CD8-positive, alpha-beta memory T cell (primary cell): ENCODE measurements at regions of chr19 and their contacts with region 1.

Region 1: DNA sequence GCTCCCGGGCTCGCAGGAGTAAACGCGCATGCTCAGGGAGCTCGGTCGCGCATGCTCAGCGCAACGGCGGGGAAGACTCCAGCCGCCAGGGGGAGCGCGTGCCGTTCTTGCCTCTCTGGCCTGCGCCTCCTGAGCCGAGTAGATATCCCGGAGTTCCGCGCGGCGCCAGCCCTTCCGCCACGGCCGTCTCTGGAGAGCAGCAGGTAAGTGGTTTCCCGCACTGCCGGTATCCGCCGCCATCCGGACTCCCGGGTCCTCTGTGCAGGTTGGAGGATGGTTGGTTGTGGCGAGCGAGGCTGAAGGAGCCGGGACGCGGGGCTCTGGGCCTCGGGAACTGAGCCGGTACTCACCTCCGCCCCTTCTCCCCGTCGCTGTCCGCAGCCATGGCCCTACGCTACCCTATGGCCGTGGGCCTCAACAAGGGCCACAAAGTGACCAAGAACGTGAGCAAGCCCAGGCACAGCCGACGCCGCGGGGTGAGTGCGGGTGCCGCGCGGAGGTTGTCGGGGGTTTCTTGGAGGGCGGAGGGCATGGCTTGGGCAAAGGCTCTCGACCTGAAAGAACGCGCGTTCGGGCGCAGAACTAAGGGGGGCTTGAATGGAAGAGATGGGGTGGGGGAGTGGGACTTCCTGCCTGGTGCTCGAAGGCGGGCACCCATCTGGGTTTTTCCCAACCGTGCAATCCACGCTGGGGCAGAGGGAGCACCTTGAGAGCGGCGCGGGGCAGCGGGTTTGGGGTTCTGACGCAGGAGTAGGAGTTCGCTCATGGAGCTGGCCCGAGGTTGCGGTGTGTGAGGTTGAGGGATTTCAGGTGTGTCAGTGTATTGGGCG is at the start of gene RPL36:
- DNase-seq: peak; percentile 97 to 98 (median 98)
- H3K4me3 ChIP-seq: peak within 1 kb of the TSS; percentile 97
- H3K4me3 Mint-ChIP-seq: peak within 1 kb of the TSS; percentile 91 to 97 (median 95)
- H3K27ac ChIP-seq: peak within 1 kb of the TSS; percentile 89
- H3K27ac Mint-ChIP-seq: peak within 1 kb of the TSS; percentile 90 to 99 (median 97)
- H3K4me1 ChIP-seq: peaks cover 16% of the 10 kb centered on the region
- H3K4me1 Mint-ChIP-seq: peaks cover 24 to 64% (median 28%) of the 10 kb centered on the region in 3 donors
- H3K27me3 ChIP-seq: no peaks in the 10 kb centered on the region
- H3K27me3 Mint-ChIP-seq: no peaks in the 10 kb centered on the region
- total RNA-seq, gene RPL36: 1,478 to 1,485 TPM

Region 2: GRCh38 chr19:5622463-5623396 is 67.6 kb before region 1 on chr19 and contains the starts of genes SAFB and SAFB2:
- CTCF ChIA-PET with region 1: interaction called, 35 read pairs
- POLR2A ChIA-PET with region 1: interaction called, 25 read pairs
- DNase-seq: peak; percentile 99 to 100 (median 100)
- H3K4me3 ChIP-seq: peak within 1 kb of the TSS; percentile 90
- H3K4me3 Mint-ChIP-seq: peak within 1 kb of the TSS; percentile 98 to 100 (median 100)
- H3K27ac ChIP-seq: peak within 1 kb of the TSS; percentile 93
- H3K27ac Mint-ChIP-seq: peak within 1 kb of the TSS; percentile 99 to 100 (median 100)
- H3K4me1 ChIP-seq: peaks cover 76% of the 10 kb centered on the region
- H3K4me1 Mint-ChIP-seq: peaks cover 73 to 85% (median 80%) of the 10 kb centered on the region in 3 donors
- H3K27me3 ChIP-seq: no peaks in the 10 kb centered on the region
- H3K27me3 Mint-ChIP-seq: peaks cover 0 to 6% of the 10 kb centered on the region in 2 donors
- total RNA-seq, gene SAFB: 124 to 132 TPM
- total RNA-seq, gene SAFB2: 87.8 to 98.2 TPM

Region 3: DNA sequence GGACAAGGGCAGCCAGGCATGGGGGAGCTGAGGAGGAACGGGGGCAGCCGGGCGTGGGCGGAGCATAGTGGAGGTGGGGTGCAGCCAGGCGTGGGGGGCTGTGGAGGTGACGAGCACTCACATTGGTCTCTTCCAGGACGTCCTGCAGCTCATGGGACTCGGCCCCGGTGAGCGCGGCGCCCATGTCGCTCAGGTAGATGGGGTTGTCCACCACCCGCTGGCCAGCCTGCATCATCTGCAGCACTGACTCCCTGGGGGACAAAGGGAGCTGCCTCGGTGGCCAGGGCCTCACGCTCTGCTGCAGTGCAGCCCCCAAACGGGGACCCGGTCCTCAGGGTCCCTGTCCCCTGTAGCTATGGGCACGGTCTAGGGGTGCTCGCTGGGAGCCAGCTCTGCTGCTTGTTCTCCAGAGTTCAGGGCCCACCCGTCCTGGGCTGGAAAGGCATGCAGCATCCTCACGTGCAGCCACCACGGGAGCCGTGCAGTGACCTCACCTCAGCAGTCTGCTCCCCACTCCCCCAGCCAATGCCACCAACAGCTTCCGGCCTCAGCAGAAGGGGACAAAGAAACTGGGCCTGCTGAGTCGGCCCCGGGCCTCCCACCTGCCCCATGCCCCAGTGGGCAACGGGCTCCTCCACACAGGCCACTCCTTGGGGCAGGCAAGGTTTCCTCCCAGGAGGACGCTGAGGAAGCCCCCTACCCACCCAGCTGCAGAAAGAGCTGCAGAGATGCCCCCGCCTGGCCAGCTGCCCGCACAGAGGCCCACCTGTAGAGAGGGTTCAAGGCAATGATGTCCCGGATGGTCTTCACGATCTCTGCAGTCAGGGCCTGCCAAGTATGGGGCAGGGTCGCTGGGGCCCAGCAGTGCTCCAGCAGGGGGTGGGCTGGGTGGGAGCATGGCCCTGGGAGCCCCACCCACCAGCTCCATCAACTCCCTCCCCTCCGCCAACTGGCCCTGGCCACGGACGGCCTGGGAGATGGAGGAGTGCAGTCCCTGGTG is 17.5 kb after region 1 on chr19:
- CTCF ChIA-PET with region 1: interaction called, 18 read pairs
- POLR2A ChIA-PET with region 1: interaction called, 3 read pairs
- DNase-seq: no peak
- H3K4me3 ChIP-seq: no peak overlapping the region
- H3K4me3 Mint-ChIP-seq: no peak overlapping the region
- H3K27ac ChIP-seq: no peak overlapping the region
- H3K27ac Mint-ChIP-seq: no peak overlapping the region
- H3K4me1 ChIP-seq: no peaks in the 10 kb centered on the region
- H3K4me1 Mint-ChIP-seq: no peaks in the 10 kb centered on the region
- H3K27me3 ChIP-seq: no peaks in the 10 kb centered on the region
- H3K27me3 Mint-ChIP-seq: no peaks in the 10 kb centered on the region

Region 4: GRCh38 chr19:5714819-5715218 is 24.5 kb after region 1 on chr19:
- CTCF ChIA-PET with region 1: interaction called, 47 read pairs
- POLR2A ChIA-PET with region 1: interaction called, 28 read pairs
- DNase-seq: no peak
- H3K4me3 ChIP-seq: no peak overlapping the region
- H3K4me3 Mint-ChIP-seq: no peak overlapping the region
- H3K27ac ChIP-seq: no peak overlapping the region
- H3K27ac Mint-ChIP-seq: no peak overlapping the region
- H3K4me1 ChIP-seq: peaks cover 22% of the 10 kb centered on the region
- H3K4me1 Mint-ChIP-seq: peaks cover 23 to 28% (median 26%) of the 10 kb centered on the region in 3 donors
- H3K27me3 ChIP-seq: no peaks in the 10 kb centered on the region
- H3K27me3 Mint-ChIP-seq: no peaks in the 10 kb centered on the region

Region 5: DNA sequence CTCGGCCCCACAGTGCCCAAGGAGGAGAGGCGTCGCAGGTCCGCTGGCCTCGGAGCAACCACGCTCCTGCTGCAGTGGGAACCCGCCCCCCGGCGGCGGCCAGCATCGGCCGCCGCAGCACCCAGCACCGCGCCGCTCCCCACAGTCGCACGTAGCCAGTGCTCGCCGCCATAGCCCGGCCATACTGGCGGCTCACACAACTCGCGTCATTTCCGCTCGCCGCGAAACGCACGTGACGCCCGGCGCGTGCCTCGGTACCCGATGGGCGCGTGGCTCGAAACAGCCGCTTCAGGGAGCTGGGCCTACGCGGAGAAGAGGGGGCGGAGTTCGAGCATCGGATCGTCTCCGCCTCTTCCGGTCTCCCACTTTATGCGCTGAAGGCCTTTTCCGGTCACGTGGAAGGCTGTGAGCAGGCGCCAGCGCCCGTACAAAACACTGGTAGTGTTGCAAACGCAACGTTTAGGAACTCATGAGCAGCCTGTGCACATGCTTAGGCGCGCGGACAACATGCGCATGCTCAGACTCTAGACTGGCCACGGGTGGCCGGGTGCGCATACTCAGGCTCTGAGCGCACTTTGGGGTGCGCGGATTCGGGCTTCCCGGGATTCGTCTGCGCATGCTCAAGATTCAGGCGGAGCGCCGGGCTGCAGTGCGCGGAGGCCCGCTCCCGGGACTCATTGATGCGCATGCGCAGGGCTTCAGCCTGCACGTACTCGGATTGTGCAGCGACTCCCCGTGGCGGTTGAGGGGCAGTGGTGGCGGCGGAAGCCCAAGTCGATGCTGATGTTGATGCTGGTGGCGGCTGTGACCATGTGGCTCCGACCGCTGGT is 29.8 kb after region 1 on chr19 and contains the starts of genes CATSPERD and LONP1:
- CTCF ChIA-PET with region 1: interaction called, 47 read pairs
- POLR2A ChIA-PET with region 1: interaction called, 28 read pairs
- DNase-seq: peak; percentile 96 to 99 (median 99)
- H3K4me3 ChIP-seq: peak within 1 kb of the TSS; percentile 93
- H3K4me3 Mint-ChIP-seq: peak within 1 kb of the TSS; percentile 89 to 96 (median 92)
- H3K27ac ChIP-seq: peak within 1 kb of the TSS; percentile 91
- H3K27ac Mint-ChIP-seq: peak within 1 kb of the TSS; percentile 93 to 98 (median 95)
- H3K4me1 ChIP-seq: peaks cover 22% of the 10 kb centered on the region
- H3K4me1 Mint-ChIP-seq: peaks cover 21 to 32% (median 28%) of the 10 kb centered on the region in 3 donors
- H3K27me3 ChIP-seq: no peaks in the 10 kb centered on the region
- H3K27me3 Mint-ChIP-seq: peaks cover 0 to 5% of the 10 kb centered on the region in 2 donors
- total RNA-seq, gene CATSPERD: not detected
- total RNA-seq, gene LONP1: 179 to 204 TPM